ENCODE measurements at regions of chr18 and their contacts with region 1.

Region 1: DNA sequence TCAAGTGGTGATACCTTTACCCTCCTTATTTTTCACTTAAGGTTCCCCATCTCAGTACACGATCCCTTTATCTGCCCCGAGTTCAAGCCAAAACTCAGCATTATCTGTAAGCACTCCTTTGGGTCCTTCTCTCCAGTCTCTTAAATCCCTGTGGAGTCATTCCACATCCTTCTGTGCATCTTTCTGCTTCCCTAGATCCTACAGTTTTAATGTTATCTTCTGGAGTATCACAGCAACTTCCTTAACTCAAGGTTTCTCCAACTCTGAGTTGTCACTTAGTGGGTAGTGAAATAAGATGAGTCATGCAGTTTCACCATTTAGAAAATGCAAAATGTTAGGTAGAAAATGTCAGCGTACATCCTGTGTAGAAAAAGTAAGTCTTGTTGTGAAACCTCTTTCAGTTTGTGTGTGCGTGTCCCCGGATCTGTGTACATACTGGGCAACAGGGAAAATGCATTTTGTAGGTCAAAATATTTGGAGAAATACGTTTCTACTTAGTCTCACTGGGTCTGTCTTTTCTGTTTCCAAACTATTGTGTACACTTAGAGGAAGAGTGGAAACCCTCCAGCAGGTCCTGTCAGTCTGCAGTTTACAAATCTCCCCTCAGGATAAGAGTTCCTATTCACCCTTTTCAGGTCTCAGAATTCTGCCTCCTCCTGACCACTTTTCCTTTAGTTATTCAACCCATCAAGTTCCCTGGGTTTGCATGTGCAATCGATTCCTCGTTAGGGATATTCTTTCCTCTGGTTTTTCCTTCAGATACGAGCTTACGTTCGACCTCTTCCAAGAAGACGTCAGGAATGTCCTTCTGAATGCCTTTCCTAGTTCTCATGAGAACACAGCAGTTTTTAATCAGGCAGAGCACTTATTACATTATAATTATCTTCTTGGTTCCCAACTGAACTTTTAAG is 154.8 kb downstream of the TGIF1 start:
- DNase-seq: peak; percentile 98
- ATAC-seq: peak; percentile 40
- H3K4me3 ChIP-seq: peak overlapping the region; percentile 49
- H3K27ac ChIP-seq: peak overlapping the region; percentile 100
- H3K4me1 ChIP-seq: peaks cover 12% of the 10 kb centered on the region
- H3K27me3 ChIP-seq: no peaks in the 10 kb centered on the region
- CTCF ChIP-seq: no peak
- POLR2A ChIP-seq: peak; percentile 91
- RAD21 ChIP-seq: 0 out of 2 replicates have a peak, but pooled peaks have one; percentile 4

Region 2: GRCh38 chr18:2994603-2995432 is 609.9 kb before region 1 on chr18:
- CTCF ChIA-PET with region 1: no interaction called
- POLR2A ChIA-PET with region 1: no interaction called
- dilution Hi-C with region 1: no loop called
- in situ Hi-C with region 1: loop called (anchors 25 kb)
- intact Hi-C with region 1: no loop called
- DNase-seq: no peak
- ATAC-seq: peak; percentile 54; the same call in 1 of the 2 replicates
- H3K4me3 ChIP-seq: no peak overlapping the region
- H3K27ac ChIP-seq: no peak overlapping the region
- H3K4me1 ChIP-seq: peaks cover 9% of the 10 kb centered on the region
- H3K27me3 ChIP-seq: no peaks in the 10 kb centered on the region
- CTCF ChIP-seq: 0 out of 2 replicates have a peak, but pooled peaks have one; percentile 19
- POLR2A ChIP-seq: no peak
- RAD21 ChIP-seq: peak; percentile 19; the same call in 1 of the 2 replicates

Region 3: DNA sequence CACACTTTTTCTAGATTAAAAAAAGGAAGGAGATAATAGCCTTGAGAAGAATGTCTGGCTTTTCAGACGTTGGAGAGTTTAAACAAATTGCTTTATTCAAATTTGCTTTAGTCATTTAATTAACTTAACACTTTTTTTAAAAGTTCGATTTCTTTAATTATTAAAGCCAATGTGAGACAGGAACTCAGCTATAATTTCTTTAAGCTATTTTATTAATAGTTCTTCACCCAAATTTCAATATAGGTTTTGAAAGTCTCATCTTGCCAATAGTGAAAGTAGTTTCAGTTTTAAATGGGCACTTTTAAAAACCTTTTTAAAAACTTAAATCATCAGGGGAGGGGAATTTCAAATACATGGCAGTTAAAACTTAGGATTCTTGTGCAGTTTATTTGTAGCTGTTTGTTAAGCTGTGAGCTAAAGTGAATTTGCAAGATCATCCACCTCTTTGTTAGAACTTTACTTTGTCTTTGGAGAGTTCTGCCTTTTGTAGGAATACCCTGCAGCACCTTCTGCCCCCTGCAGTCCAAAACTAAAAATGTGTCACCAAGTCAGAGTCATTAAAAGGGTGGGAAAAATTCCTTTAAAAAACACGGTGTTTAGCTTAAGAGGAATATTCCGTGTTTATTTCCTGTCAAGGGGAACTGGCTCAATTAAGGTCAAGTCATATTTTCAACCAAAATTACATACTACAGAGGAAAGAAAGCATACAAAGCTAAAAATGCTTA is 150.2 kb before region 1 on chr18:
- CTCF ChIA-PET with region 1: interaction called, 6 read pairs
- POLR2A ChIA-PET with region 1: interaction called, 13 read pairs
- dilution Hi-C with region 1: no loop called
- in situ Hi-C with region 1: loop called (anchors 5 kb)
- intact Hi-C with region 1: loop called (anchors 1 kb)
- DNase-seq: peak; percentile 72
- ATAC-seq: no peak
- H3K4me3 ChIP-seq: peak overlapping the region; percentile 85
- H3K27ac ChIP-seq: peak overlapping the region; percentile 30; the same call in 1 of the 2 replicates
- H3K4me1 ChIP-seq: peaks cover 16% of the 10 kb centered on the region
- H3K27me3 ChIP-seq: no peaks in the 10 kb centered on the region
- CTCF ChIP-seq: peak; percentile 60
- POLR2A ChIP-seq: no peak
- RAD21 ChIP-seq: peak; percentile 40; the same call in 1 of the 2 replicates

Region 4: DNA sequence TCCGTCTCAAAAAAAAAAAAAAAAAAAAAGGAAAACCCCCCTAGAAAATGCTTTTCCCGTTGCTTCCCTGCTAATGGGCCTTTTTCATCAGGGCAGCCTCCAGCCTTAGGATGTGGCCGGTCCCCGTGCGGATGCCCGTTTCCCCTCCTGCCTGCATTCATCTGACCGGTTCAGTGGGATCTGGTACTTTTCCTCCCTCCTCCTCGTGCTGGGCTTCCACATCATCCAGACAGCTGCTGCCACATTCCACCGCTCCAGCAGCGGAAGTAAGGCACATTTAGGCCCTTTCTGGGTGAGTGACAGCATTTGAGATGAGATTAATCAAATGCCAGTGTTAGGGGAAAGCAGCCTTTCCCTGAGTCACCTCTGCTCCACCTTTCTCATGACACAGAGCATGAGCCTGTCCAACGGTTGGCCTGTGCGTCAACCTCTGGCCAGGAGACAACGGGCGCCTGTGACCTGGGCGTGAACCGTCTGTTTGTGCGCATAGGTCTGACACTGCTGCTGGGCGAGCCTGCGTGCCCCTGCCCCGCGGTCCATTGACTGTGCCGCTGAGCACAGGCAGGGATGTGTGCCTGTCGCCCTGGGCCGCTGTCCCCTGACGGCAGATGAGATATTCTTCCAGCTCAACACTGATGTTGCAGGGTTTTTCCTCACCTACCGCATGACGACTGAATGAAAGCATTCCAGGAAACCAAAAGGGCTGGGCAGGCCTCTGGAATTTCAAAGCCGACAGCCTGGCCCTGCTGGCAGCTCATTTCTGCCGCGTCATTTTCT is 19.2 kb after region 1 on chr18:
- CTCF ChIA-PET with region 1: no interaction called
- POLR2A ChIA-PET with region 1: interaction called, 14 read pairs
- dilution Hi-C with region 1: no loop called
- in situ Hi-C with region 1: no loop called
- intact Hi-C with region 1: loop called (anchors 1 kb)
- DNase-seq: peak; percentile 98
- ATAC-seq: peak; percentile 62
- H3K4me3 ChIP-seq: peak overlapping the region; percentile 13; the same call in 1 of the 2 replicates
- H3K27ac ChIP-seq: peak overlapping the region; percentile 96
- H3K4me1 ChIP-seq: peaks cover 25% of the 10 kb centered on the region
- H3K27me3 ChIP-seq: no peaks in the 10 kb centered on the region
- CTCF ChIP-seq: no peak
- POLR2A ChIP-seq: peak; percentile 78
- RAD21 ChIP-seq: peak; percentile 17; the same call in 1 of the 2 replicates

Region 5: DNA sequence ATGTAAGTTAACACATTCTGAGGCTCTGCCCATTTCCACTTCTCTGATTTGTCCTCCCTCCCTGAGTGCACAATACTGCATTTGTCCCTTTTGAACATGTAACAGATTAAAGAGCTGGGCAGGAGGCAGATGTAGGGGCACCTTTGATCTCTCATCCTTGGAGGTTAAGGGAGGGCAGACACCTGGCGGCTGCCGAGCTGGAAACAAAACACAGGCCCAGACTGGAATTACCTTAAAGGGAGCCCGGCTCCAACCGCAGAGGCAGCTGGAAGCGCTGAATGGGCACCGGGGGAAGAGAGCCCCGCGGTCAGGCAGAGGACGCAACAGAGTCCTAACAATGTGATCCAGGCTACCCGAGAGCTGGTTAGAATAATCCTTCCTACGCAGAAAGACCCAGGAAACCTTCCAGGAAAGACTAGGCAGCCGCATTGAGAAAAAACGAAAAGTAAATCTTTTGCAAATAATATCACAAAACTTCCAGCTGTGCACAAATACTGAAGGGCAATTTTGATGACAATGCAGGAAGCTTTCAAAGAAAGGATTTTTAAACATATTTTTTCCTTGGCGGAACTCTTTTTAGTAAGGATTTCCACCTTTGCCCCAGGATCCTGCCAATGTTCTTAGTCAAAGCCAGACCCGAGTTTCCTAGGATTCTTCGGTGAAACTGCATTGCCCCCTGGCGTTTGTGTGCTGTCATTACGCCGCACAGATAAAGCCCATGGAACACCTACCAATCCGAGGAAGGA is 61.2 kb after region 1 on chr18:
- CTCF ChIA-PET with region 1: interaction called, 8 read pairs
- POLR2A ChIA-PET with region 1: interaction called, 9 read pairs
- dilution Hi-C with region 1: no loop called
- in situ Hi-C with region 1: loop called (anchors 10 kb)
- intact Hi-C with region 1: loop called (anchors 1 kb)
- DNase-seq: peak; percentile 91
- ATAC-seq: peak; percentile 96
- H3K4me3 ChIP-seq: no peak overlapping the region
- H3K27ac ChIP-seq: peak overlapping the region; percentile 72
- H3K4me1 ChIP-seq: peaks cover 7% of the 10 kb centered on the region
- H3K27me3 ChIP-seq: no peaks in the 10 kb centered on the region
- CTCF ChIP-seq: peak; percentile 94
- POLR2A ChIP-seq: no peak
- RAD21 ChIP-seq: peak; percentile 99